ENCODE measurements at regions of chr3 and their contacts with region 1.

Region 1: GRCh38 chr3:101836652-101837598 is 12.4 kb upstream of the NFKBIZ start:
- DNase-seq: no peak
- ATAC-seq: peak; percentile 84
- H3K4me3 Mint-ChIP-seq: peak overlapping the region; percentile 79
- H3K27ac Mint-ChIP-seq: peak overlapping the region; percentile 85
- H3K4me1 Mint-ChIP-seq: peaks cover 91% of the 10 kb centered on the region
- H3K27me3 Mint-ChIP-seq: no peaks in the 10 kb centered on the region
- CTCF ChIP-seq: no peak

Region 2: GRCh38 chr3:101744735-101745134 is 92.2 kb before region 1 on chr3:
- CTCF ChIA-PET with region 1: no interaction called
- POLR2A ChIA-PET with region 1: no interaction called
- intact Hi-C with region 1: no loop called
- DNase-seq: no peak
- ATAC-seq: no peak
- H3K4me3 Mint-ChIP-seq: no peak overlapping the region
- H3K27ac Mint-ChIP-seq: no peak overlapping the region
- H3K4me1 Mint-ChIP-seq: no peaks in the 10 kb centered on the region
- H3K27me3 Mint-ChIP-seq: no peaks in the 10 kb centered on the region
- CTCF ChIP-seq: no peak

Region 3: DNA sequence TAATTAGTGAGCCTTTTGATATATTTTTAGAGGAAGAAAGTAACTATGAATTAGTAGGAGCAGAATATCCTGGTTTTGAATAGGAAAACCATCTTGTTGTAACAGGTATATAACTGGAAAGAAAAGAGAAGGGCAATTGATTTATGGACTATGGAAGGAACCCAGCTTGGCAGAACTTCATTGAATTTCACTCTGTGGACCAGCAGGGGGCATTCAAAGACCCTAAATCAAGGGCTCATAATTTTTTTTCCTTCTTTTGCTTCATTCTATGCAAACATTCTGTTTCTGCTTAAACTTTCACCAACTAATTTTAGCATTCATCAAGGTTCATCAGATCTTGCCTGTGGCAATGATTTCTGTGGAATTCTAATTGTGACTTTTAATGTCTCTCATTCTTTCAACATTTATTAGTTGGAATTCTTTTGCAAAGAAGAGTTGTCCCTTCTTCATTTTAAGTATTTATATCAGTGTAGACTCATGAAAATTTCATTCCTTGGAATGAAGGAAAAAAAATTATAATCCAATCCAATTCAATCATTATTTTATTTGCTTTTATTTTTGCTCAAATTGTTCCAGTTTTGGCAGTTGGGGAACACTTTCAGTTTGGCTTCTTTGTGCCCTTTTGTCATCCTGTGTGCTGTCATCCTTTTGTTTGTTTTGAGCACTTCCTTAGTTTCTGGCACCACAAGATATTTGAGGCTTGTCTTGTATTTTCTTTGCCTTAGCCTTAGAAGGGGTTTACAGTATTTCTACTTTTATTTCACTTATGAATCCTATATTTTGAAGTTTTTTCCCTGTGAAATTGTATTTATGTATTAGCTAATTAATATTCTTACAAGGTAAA is 27.5 kb before region 1 on chr3:
- CTCF ChIA-PET with region 1: interaction called, 17 read pairs
- POLR2A ChIA-PET with region 1: interaction called, 3 read pairs
- intact Hi-C with region 1: no loop called
- DNase-seq: no peak
- ATAC-seq: peak; percentile 82
- H3K4me3 Mint-ChIP-seq: no peak overlapping the region
- H3K27ac Mint-ChIP-seq: no peak overlapping the region
- H3K4me1 Mint-ChIP-seq: peaks cover 37% of the 10 kb centered on the region
- H3K27me3 Mint-ChIP-seq: no peaks in the 10 kb centered on the region
- CTCF ChIP-seq: peak; percentile 59

Region 4: GRCh38 chr3:103440539-103441203 is 1603.7 kb after region 1 on chr3:
- CTCF ChIA-PET with region 1: no interaction called
- POLR2A ChIA-PET with region 1: no interaction called
- intact Hi-C with region 1: no loop called
- DNase-seq: no peak
- ATAC-seq: no peak
- H3K4me3 Mint-ChIP-seq: no peak overlapping the region
- H3K27ac Mint-ChIP-seq: no peak overlapping the region
- H3K4me1 Mint-ChIP-seq: no peaks in the 10 kb centered on the region
- H3K27me3 Mint-ChIP-seq: no peaks in the 10 kb centered on the region
- CTCF ChIP-seq: no peak